ENCODE measurements at regions of chr7 and their contacts with region 1.

Region 1: GRCh38 chr7:12623897-12624498 is 53.5 kb downstream of the SCIN start:
- DNase-seq: no peak
- H3K4me3 ChIP-seq: no peak overlapping the region
- H3K27ac ChIP-seq: no peak overlapping the region
- H3K4me1 ChIP-seq: no peaks in the 10 kb centered on the region
- H3K27me3 ChIP-seq: no peaks in the 10 kb centered on the region
- CTCF ChIP-seq: peak; percentile 72 to 86 (median 84)
- EP300 ChIP-seq: no peak
- POLR2A ChIP-seq: no peak

Region 2: DNA sequence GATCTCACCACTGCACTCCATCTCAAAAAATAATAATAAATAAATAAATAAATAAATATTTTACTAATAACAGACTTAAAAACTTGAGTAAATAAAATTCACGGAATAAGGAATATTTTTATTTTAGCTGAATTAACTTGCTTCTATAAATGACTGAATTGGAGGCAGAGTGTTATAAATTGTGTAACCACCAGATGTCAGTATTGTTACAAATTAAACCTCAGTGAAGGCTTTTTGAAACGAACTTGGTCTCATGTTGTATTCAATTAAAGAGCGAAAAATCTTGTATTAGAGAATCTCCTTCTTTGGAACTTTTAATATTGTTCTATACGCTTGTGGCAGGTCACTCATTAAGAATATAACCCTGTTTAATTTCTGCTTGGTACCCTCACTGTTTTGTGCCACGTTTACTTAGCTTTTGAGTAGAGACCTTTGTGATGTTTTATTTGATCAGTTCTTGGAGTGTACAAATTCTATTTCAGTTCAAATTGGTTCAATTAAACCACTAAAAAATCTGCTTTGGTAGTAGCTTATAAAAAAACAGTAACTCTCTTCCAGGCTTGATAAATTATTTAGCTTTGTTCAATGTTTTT is 99.1 kb before region 1 on chr7:
- in situ Hi-C with region 1: loop called (anchors 5 to 10 kb)
- intact Hi-C with region 1: no loop called
- DNase-seq: no peak
- H3K4me3 ChIP-seq: no peak overlapping the region
- H3K27ac ChIP-seq: no peak overlapping the region
- H3K4me1 ChIP-seq: no peaks in the 10 kb centered on the region
- H3K27me3 ChIP-seq: no peaks in the 10 kb centered on the region
- CTCF ChIP-seq: peak; percentile 63 to 71 (median 67)
- EP300 ChIP-seq: no peak
- POLR2A ChIP-seq: no peak

Region 3: GRCh38 chr7:12729112-12729511 is 105.1 kb after region 1 on chr7:
- in situ Hi-C with region 1: no loop called
- intact Hi-C with region 1: no loop called
- DNase-seq: peak; percentile 45
- H3K4me3 ChIP-seq: no peak overlapping the region
- H3K27ac ChIP-seq: no peak overlapping the region
- H3K4me1 ChIP-seq: peaks cover 0 to 12% (median 0%) of the 10 kb centered on the region in 4 donors
- H3K27me3 ChIP-seq: no peaks in the 10 kb centered on the region
- CTCF ChIP-seq: no peak
- EP300 ChIP-seq: no peak
- POLR2A ChIP-seq: no peak